ENCODE measurements at regions of chr10 and their contacts with region 1.

Region 1: GRCh38 chr10:11930342-11930978 is 107.3 kb downstream of the PROSER2 start:
- H3K4me3 ChIP-seq: no peak overlapping the region
- H3K27ac ChIP-seq: no peak overlapping the region
- H3K4me1 ChIP-seq: no peaks in the 10 kb centered on the region
- CTCF ChIP-seq: no peak

Region 2: GRCh38 chr10:11881477-11882417 is 48.7 kb before region 1 on chr10:
- CTCF ChIA-PET with region 1: interaction called, 11 read pairs
- POLR2A ChIA-PET with region 1: no interaction called
- H3K4me3 ChIP-seq: no peak overlapping the region
- H3K27ac ChIP-seq: no peak overlapping the region
- H3K4me1 ChIP-seq: no peaks in the 10 kb centered on the region
- CTCF ChIP-seq: no peak

Region 3: GRCh38 chr10:11962176-11962575 is 31.7 kb after region 1 on chr10:
- CTCF ChIA-PET with region 1: no interaction called
- POLR2A ChIA-PET with region 1: no interaction called
- H3K4me3 ChIP-seq: no peak overlapping the region
- H3K27ac ChIP-seq: no peak overlapping the region
- H3K4me1 ChIP-seq: no peaks in the 10 kb centered on the region
- CTCF ChIP-seq: no peak

Region 4: GRCh38 chr10:12158111-12158510 is 227.7 kb after region 1 on chr10:
- CTCF ChIA-PET with region 1: no interaction called
- POLR2A ChIA-PET with region 1: no interaction called
- H3K4me3 ChIP-seq: no peak overlapping the region
- H3K27ac ChIP-seq: no peak overlapping the region
- H3K4me1 ChIP-seq: no peaks in the 10 kb centered on the region
- CTCF ChIP-seq: no peak